HCT116 (cell line): ENCODE measurements at regions of chr14 and their contacts with region 1.

Region 1: DNA sequence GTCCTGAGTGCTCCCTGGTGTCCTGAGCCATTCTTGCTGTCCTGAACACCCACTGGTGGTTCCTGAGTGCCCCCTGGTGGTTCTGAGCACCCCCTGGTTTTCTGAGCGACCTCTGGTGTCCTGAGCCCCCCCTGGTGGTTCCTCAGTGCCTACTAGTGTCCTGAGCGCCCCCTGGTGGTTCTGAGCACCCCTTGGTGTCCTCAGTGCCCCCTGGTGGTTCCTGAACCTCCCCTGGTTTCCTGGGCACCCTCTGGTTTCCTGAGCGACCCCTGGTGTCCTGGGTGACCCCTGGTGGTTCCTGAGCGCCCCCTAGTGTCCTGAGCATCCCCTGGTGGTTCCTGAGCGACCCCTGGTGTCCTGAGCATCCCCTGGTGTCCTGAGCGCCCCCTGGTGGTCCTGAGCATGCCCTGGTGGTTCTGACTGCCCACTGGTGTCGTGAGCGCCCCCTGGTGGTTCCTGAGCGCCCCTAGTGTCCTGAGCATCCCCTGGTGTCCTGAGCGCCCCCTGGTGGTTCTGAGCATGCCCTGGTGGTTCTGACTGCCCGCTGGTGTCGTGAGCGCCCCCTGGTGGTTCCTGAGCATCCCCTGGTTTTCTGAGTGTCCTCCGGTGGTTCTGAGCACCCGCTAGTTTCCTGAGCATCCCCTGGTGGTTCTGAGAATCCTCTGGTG is 473.1 kb downstream of the TMEM121 start:
- DNase-seq: peak; percentile 24
- ATAC-seq: no peak
- H3K4me3 ChIP-seq: no peak overlapping the region
- H3K27ac ChIP-seq: no peak overlapping the region
- H3K4me1 ChIP-seq: no peaks in the 10 kb centered on the region
- H3K27me3 ChIP-seq: no peaks in the 10 kb centered on the region
- CTCF ChIP-seq: peak; percentile 60 to 98 (median 64)
- POLR2A ChIP-seq: no peak
- RAD21 ChIP-seq: peak; percentile 33

Region 2: DNA sequence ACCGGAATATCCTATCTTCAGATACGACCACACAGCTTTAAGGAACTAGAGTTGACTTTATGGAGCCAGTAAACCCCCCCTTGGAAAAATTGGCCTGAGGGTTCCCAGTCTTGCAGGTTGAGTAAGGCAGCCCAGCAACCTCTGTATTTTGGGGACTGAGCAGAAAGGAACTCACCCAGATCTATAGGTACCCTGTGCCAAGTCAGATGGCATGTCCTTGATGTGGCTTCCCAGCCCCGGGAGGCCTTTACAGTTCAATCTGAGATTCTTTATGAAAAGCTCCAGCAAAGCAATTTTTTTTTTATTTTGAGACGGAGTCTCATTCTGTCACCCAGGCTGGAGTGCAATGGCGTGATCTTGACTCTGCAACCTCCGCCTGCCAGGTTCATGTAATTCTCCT is 445.5 kb before region 1 on chr14:
- CTCF ChIA-PET with region 1: no interaction called
- POLR2A ChIA-PET with region 1: no interaction called
- RAD21 ChIA-PET with region 1: no interaction called
- intact Hi-C with region 1: loop called (anchors 10 kb)
- DNase-seq: no peak
- ATAC-seq: no peak
- H3K4me3 ChIP-seq: no peak overlapping the region
- H3K27ac ChIP-seq: no peak overlapping the region
- H3K4me1 ChIP-seq: no peaks in the 10 kb centered on the region
- H3K27me3 ChIP-seq: no peaks in the 10 kb centered on the region
- CTCF ChIP-seq: no peak
- POLR2A ChIP-seq: no peak
- RAD21 ChIP-seq: no peak

Region 3: DNA sequence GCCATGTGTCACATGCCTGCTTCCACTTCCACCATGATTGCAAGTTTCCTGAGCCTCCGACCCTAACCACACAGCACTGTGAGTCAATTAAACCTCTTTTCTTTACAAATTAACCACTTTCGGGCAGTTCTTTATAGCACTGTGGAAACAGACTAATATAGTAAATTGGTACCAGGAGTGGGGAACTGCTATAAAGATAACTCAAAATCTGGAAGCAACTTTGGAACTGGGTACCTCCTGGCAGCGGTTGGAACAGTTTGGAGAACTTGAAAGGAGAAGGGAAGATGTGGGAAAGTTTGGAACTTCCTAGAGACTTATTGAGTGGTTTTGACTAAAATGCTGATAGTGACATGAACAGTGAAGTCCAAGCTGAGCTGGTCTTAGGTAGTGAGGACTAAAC is 37.0 kb before region 1 on chr14:
- CTCF ChIA-PET with region 1: no interaction called
- POLR2A ChIA-PET with region 1: no interaction called
- RAD21 ChIA-PET with region 1: no interaction called
- intact Hi-C with region 1: no loop called
- DNase-seq: no peak
- ATAC-seq: no peak
- H3K4me3 ChIP-seq: no peak overlapping the region
- H3K27ac ChIP-seq: no peak overlapping the region
- H3K4me1 ChIP-seq: no peaks in the 10 kb centered on the region
- H3K27me3 ChIP-seq: no peaks in the 10 kb centered on the region
- CTCF ChIP-seq: no peak
- POLR2A ChIP-seq: no peak
- RAD21 ChIP-seq: no peak

Region 4: DNA sequence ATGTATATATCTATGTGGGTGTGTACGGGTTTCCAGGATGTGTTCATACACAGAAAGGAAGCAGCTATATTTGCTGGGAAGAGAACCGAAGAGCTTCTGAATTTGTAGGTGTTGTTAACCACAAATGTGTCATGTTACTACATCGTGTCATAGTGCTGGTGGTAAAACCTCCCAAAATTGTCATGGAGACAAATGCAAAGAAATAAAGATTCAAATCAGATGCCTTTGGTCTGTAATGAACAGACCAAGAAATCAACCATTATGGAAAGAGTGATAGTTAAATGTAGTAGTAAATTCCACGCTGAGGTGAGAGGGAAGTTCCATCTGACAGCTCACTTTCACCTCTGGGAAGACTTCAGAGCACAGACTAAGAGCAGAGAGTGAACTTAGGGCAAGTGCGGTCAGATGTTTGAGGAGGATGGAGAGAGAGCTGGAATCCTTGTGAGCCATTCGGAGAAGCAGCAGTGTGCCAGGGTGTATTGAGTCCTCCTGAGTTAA is 14.4 kb after region 1 on chr14:
- CTCF ChIA-PET with region 1: no interaction called
- POLR2A ChIA-PET with region 1: no interaction called
- RAD21 ChIA-PET with region 1: no interaction called
- intact Hi-C with region 1: no loop called
- DNase-seq: no peak
- ATAC-seq: no peak
- H3K4me3 ChIP-seq: no peak overlapping the region
- H3K27ac ChIP-seq: no peak overlapping the region
- H3K4me1 ChIP-seq: no peaks in the 10 kb centered on the region
- H3K27me3 ChIP-seq: no peaks in the 10 kb centered on the region; the same call in 1 of the 2 replicates
- CTCF ChIP-seq: no peak
- POLR2A ChIP-seq: no peak
- RAD21 ChIP-seq: no peak